ENCODE measurements at regions of chr19 and their contacts with region 1.

Region 1: DNA sequence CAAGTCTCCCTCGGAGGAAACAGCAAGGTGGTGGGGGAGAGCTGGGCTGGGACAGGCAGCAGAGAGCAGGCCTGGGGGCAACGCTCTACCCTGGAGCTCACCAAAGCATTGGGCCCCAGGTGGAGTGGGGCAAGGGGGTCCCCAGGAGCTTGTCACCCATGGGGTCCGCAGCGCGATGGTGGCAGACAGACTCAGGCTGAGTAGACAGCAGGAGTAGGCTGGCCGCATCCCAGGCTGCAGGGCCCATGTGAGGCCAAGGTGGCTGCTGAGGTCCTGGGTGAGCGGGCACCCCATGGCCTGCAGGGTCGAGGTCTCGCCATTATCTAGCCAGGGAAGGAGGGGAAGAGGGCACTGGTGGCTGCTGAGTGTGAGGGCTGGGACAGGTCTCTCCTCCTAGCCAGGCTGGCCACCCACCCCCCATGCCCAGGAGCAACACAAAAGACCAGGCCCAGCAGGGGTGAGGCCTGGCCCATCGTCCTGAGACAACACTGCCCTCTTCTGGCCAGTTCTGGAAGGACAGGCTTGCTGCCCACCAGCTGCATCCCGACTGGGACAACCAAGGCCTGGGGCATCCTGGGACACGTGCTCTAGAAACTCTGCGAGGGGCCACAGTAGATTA is 33.1 kb downstream of the CEBPG start:
- DNase-seq: peak in 3 of 4 donors; percentile 74 to 89 (median 79)
- ATAC-seq: peak; percentile 78
- H3K4me3 ChIP-seq: no peak overlapping the region
- H3K27ac ChIP-seq: no peak overlapping the region
- H3K4me1 ChIP-seq: peaks cover 0 to 11% of the 10 kb centered on the region in 2 donors
- H3K27me3 ChIP-seq: no peaks in the 10 kb centered on the region
- CTCF ChIP-seq: peak; percentile 94 to 98

Region 2: DNA sequence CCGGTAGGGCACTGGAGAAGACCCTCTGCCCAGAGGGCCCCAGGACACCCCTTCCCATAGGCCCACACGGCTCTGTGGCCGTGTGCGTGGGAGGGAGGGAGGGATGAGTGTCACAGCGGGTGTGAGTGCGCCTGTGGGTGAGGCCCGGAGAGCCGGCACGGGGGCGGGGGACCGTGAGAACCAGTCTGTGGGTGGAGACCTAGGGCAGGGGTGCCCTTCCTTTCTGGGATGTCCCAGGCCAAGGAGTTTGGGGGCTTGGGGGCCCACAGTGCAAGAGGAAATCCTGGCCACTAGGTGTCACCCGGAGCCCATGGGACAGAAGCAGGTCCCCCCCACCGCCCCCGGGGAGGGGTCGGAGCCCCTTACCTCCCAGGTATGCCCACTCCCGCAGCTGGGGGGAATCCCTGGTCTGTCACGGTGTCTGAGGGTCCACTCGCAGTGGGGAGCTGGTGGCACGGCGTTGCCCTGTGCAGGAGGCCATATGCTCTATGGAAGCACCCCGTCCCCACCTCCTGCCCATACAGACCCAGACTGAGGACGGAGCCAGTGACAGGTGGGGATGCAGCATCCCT is 165.0 kb before region 1 on chr19:
- intact Hi-C with region 1: loop called in 1 of 2 experiments (anchors 2 kb)
- DNase-seq: peak in 1 of 4 donors; percentile 76
- ATAC-seq: peak; percentile 79
- H3K4me3 ChIP-seq: no peak overlapping the region
- H3K27ac ChIP-seq: no peak overlapping the region
- H3K4me1 ChIP-seq: peaks cover 0 to 9% of the 10 kb centered on the region in 2 donors
- H3K27me3 ChIP-seq: peaks cover 0 to 30% of the 10 kb centered on the region in 2 donors
- CTCF ChIP-seq: peak; percentile 66 to 73

Measured in left lung (tissue), 14 donors.